CD4-positive, alpha-beta memory T cell (primary cell): ENCODE measurements at regions of chr17 and their contacts with region 1.

Region 1: DNA sequence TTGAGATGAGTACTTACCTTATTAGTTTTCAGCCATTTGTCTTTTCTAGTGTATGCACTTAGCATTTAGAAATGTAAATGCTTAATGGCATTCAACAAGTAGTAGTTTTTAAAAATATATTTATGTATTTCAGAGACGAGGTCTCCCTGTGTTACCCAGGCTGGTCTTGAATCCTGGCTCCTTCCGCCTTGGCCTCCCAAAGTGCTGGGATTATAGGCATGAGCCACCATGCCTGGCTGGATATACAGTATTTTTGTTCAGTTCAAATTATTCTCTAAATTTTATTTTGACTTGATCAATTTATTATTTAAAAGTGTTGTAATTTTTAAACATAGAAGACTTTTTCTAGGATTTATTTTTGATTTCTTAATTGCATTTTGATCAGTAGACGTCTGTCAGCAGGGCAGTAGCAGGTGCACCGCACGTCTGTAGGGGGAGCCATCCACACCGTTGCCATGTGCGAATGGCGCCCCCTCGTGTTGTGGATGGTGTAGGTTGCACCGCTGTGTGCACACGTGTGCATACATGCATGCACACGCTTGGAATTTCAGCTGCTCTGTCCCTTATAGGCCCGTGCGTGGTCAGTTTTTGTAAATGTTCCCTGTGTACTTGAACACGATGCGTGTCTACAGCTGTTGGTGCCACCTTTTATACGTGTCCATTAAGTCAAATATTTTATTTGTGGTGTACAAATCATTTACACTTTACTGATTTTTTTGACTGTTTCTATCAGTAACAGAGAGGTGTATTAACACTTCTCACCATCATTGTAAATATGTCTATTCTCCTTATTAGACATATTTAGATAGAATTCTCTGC is 30.6 kb downstream of the RPTOR start:
- DNase-seq: peak; percentile 83 to 87 (median 83)
- H3K4me3 ChIP-seq: no peak overlapping the region
- H3K4me3 Mint-ChIP-seq: no peak overlapping the region
- H3K27ac ChIP-seq: no peak overlapping the region
- H3K27ac Mint-ChIP-seq: peak overlapping the region in 2 of 7 donors; percentile 35 to 61
- H3K4me1 ChIP-seq: peaks cover 10% of the 10 kb centered on the region
- H3K4me1 Mint-ChIP-seq: peaks cover 8 to 23% (median 13%) of the 10 kb centered on the region in 4 donors
- H3K27me3 ChIP-seq: no peaks in the 10 kb centered on the region
- H3K27me3 Mint-ChIP-seq: no peaks in the 10 kb centered on the region

Region 2: DNA sequence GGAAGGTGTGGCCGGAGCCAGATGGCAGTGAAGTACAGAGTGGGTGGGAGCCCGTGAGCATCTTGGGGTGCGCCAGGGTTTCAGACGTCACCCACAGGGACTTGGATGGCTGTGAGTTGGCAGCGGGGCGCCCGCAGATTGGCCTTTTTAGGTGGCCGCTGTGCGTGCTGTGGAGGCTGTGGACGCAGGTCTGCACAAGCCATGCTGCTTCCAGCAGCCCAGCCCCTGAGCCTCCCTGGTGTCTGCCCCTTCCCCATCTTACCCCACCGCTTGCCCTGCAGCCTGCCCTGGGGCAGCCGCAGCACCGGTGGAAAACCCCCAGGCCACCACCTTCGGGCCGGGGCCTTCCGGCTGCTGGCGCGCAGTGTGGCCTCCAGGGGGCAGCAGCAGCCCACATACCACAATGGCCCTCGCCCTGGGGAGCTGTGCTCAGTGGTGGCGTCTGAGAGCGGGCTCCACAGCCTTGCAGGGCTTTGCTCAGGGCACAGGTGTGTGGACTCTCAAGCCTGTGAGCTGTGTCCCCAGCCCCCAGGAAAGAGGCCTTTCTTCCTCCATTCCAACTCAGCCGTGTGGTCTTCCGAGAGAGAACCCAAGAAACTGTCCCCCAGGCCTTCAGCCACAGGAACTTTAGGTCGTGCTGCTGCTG is 148.5 kb before region 1 on chr17:
- CTCF ChIA-PET with region 1: interaction called, 14 read pairs
- POLR2A ChIA-PET with region 1: no interaction called
- intact Hi-C with region 1: loop called (anchors 1 kb)
- DNase-seq: peak; percentile 83 to 87 (median 86)
- H3K4me3 ChIP-seq: no peak overlapping the region
- H3K4me3 Mint-ChIP-seq: no peak overlapping the region
- H3K27ac ChIP-seq: no peak overlapping the region
- H3K27ac Mint-ChIP-seq: peak overlapping the region in 4 of 7 donors; percentile 47 to 80 (median 68)
- H3K4me1 ChIP-seq: peaks cover 13% of the 10 kb centered on the region
- H3K4me1 Mint-ChIP-seq: peaks cover 4 to 13% (median 9%) of the 10 kb centered on the region in 4 donors
- H3K27me3 ChIP-seq: no peaks in the 10 kb centered on the region
- H3K27me3 Mint-ChIP-seq: no peaks in the 10 kb centered on the region

Region 3: GRCh38 chr17:80663781-80664206 is 88.5 kb after region 1 on chr17:
- CTCF ChIA-PET with region 1: interaction called, 5 read pairs
- POLR2A ChIA-PET with region 1: no interaction called
- intact Hi-C with region 1: loop called (anchors 1 kb)
- DNase-seq: peak in 4 of 5 donors; percentile 19 to 45 (median 36)
- H3K4me3 ChIP-seq: no peak overlapping the region
- H3K4me3 Mint-ChIP-seq: peak overlapping the region in 7 of 8 donors; percentile 41 to 96 (median 76)
- H3K27ac ChIP-seq: peak overlapping the region; percentile 62
- H3K27ac Mint-ChIP-seq: peak overlapping the region; percentile 91 to 98 (median 93)
- H3K4me1 ChIP-seq: peaks cover 63% of the 10 kb centered on the region
- H3K4me1 Mint-ChIP-seq: peaks cover 51 to 74% (median 66%) of the 10 kb centered on the region in 4 donors
- H3K27me3 ChIP-seq: no peaks in the 10 kb centered on the region
- H3K27me3 Mint-ChIP-seq: no peaks in the 10 kb centered on the region

Region 4: DNA sequence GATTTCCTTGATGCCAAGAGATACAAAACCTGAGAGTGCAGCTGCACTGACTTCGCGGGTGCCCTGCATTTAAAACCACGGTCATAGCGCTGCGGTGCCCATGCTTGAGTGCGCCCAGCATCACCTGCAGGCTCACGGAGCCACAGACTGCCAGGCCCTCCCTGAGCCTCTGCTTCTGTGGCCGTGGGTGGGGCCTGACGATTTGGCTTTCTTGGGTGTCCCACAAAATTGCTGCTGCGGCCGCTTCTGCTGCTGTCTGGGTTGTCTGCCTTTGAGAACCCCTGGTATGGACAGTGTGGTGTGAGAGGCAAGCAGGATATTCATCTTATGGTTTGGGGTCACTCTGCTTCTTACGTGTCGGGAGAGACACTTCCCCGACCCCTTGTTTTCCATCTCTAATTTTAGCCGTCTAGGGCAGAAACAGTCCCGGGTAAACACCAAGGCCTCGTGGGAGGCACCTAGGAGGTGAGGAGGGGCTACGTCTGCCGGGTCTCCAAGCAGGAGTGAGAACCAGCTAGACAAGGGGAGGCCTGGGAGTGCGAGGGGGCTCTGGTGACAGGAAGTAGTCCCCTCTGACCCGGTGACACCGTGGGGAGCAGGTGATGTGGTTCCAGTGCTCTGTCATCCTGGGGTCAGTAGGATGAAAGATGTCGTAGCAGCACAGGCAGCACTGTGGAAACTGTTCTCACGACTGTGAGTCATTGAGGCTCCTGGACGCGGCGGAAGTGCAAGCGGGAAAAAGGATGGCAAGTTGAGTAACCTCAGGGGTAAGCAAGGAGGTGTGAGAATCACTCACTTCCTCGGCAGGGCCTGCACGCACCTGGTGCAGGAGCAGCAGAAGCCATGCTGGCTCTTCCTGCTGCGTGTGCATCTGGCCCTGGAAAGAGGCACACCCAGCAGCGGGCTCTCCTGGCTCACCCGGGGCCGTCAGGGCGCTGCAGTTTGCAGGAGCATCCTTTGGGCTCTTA is 145.6 kb after region 1 on chr17:
- CTCF ChIA-PET with region 1: no interaction called
- POLR2A ChIA-PET with region 1: no interaction called
- intact Hi-C with region 1: no loop called
- DNase-seq: peak; percentile 51 to 91 (median 53)
- H3K4me3 ChIP-seq: no peak overlapping the region
- H3K4me3 Mint-ChIP-seq: peak overlapping the region; percentile 68 to 87 (median 81)
- H3K27ac ChIP-seq: peak overlapping the region; percentile 53
- H3K27ac Mint-ChIP-seq: peak overlapping the region; percentile 86 to 96 (median 93)
- H3K4me1 ChIP-seq: peaks cover 24% of the 10 kb centered on the region
- H3K4me1 Mint-ChIP-seq: peaks cover 30 to 59% (median 47%) of the 10 kb centered on the region in 4 donors
- H3K27me3 ChIP-seq: no peaks in the 10 kb centered on the region
- H3K27me3 Mint-ChIP-seq: no peaks in the 10 kb centered on the region

Region 5: GRCh38 chr17:80811181-80812105 is 236.2 kb after region 1 on chr17:
- CTCF ChIA-PET with region 1: no interaction called
- POLR2A ChIA-PET with region 1: no interaction called
- intact Hi-C with region 1: loop called (anchors 5 kb)
- DNase-seq: peak in 4 of 5 donors; percentile 15 to 58 (median 36)
- H3K4me3 ChIP-seq: no peak overlapping the region
- H3K4me3 Mint-ChIP-seq: peak overlapping the region in 6 of 8 donors; percentile 23 to 82 (median 76)
- H3K27ac ChIP-seq: peak overlapping the region; percentile 52
- H3K27ac Mint-ChIP-seq: peak overlapping the region; percentile 86 to 97 (median 95)
- H3K4me1 ChIP-seq: peaks cover 22% of the 10 kb centered on the region
- H3K4me1 Mint-ChIP-seq: peaks cover 22 to 54% (median 38%) of the 10 kb centered on the region in 4 donors
- H3K27me3 ChIP-seq: no peaks in the 10 kb centered on the region
- H3K27me3 Mint-ChIP-seq: no peaks in the 10 kb centered on the region

Region 6: DNA sequence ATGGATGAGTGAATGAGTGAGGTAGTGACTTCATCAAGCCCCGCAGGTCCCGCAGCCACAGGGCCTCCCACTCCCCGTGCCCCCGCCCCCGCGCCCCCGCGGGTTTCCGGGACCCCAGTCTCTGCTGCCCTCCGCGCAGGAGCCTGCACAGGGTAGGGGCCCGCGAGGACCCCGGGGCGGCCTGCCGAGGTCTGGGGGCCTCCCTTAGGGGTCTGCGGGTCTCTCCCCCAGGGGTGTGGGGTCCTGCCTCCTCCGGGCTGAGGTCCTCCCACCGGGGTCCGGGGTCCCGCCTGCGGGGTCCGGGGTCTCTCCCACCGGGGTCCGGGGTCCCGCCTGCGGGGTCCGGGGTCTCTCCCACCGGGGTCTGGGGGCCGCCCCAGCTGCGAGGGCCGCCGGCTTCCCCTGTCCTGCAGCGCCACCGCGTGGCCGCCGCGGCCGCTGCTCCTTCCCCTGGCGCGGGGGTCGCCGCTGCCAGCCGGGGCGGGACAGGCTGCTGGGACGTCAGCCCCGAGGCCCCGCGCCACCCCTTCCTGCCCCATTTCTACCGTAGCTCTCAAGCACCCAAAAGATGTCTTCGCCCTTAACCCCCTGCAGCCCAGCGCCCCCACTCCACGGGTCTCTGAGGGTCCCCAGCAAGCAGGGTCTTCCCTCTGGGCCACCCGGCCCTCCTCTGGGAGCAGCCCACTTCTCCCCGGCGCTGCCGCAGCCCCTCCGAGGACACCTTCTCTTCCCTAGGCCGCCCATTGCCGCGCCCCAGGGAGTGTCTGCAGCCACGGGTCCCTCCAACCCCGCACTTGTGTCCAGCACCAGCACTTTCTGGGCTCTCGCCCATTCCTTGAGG is 406.0 kb after region 1 on chr17:
- CTCF ChIA-PET with region 1: no interaction called
- POLR2A ChIA-PET with region 1: no interaction called
- intact Hi-C with region 1: loop called (anchors 10 kb)
- DNase-seq: peak in 4 of 5 donors; percentile 30 to 47 (median 34)
- H3K4me3 ChIP-seq: no peak overlapping the region
- H3K4me3 Mint-ChIP-seq: peak overlapping the region in 3 of 8 donors; percentile 65 to 72 (median 70)
- H3K27ac ChIP-seq: no peak overlapping the region
- H3K27ac Mint-ChIP-seq: no peak overlapping the region
- H3K4me1 ChIP-seq: peaks cover 7% of the 10 kb centered on the region
- H3K4me1 Mint-ChIP-seq: peaks cover 0 to 14% (median 7%) of the 10 kb centered on the region in 4 donors
- H3K27me3 ChIP-seq: no peaks in the 10 kb centered on the region
- H3K27me3 Mint-ChIP-seq: peaks cover 14% of the 10 kb centered on the region in 2 donors